ENCODE measurements at regions of chr16 and their contacts with region 1.

Region 1: DNA sequence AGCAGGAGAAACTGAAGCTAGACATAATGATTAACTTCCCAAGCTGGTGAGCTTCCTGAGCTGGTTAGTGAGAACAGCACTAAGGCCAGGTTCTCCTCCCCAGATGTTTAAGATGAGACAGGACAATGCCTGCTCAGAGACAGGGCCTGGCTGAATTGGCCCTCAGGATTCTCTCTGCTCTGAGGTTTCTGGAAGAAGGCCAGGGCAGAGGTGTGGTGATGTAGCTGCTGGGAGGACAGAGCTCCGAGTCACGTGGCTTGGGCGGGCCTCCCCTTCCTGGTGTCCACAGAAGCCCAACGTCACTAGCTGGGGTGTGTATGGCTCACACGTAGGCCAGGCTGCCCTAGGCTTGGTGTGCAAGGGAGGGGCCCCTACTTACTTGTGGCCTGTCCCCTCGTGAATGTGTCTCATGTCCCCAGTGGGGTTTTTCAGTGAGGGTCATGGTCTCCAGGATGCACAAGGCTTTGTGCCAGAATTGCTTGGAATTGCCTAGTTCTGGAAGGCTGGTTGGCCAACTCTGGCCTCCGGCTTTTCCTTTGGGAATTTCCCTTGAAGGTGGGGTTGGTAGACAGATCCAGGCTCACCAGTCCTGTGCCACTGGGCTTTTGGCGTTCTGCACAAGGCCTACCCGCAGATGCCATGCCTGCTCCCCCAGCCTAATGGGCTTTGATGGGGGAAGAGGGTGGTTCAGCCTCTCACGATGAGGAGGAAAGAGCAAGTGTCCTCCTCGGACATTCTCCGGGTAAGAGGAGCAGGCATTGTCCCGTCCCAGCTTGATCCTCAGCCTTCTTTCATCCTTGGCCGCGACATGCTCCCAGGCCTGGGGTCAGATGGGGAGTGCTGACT is 3.4 kb downstream of the NOD2 start:
- DNase-seq: peak; percentile 75 to 79
- ATAC-seq: peak; percentile 62 to 90 (median 83)
- H3K4me3 ChIP-seq: peak overlapping the region in 2 of 10 donors; percentile 7 to 48
- H3K27ac ChIP-seq: peak overlapping the region in 9 of 10 donors; percentile 61 to 92 (median 78)
- H3K4me1 ChIP-seq: peaks cover 11 to 73% (median 36%) of the 10 kb centered on the region in 9 donors
- H3K27me3 ChIP-seq: peaks cover 0 to 7% (median 0%) of the 10 kb centered on the region in 7 donors
- CTCF ChIP-seq: no peak

Region 2: DNA sequence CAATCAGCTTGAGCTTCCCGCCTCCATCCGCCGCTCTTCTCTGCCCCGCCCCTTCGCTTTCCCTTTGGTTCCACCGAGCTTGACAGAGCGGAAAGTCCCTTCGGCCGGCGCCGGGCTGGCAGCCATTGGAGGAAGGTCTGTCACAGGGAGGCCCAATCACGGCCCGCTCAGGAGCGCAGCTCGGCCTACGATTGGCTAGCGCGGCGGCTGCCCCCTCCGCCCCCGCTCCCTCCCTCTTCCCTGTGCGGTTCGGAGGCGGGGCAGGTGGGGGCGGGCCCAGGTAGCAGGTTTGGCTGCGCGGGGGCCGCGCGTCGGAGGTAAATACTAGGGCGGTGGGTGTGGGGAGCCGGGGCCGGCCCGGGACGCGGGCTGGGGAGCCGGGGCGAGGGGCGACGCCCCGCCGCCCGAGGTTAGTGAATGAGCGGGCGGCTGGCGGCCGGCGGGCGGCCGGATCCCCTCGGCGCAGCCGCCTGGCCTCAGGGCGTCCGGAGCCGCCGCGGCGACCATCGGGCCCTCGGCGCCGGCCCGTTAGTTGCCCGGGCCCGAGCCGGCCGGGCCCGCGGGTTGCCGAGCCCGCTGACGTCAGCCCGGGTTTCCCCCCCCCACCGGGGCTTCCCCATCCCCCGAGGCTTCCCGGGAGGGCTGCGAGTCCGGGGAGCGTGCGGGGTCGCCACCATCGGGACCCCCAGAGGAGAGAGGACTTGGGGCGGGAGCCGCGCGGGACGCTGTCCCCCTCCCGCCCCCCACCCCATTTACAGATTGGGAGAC is 45.2 kb after region 1 on chr16 and contains the start of gene CYLD:
- intact Hi-C with region 1: loop called in 3 of 10 experiments (anchors 2 to 5 kb)
- DNase-seq: peak; percentile 99 to 100
- ATAC-seq: peak; percentile 98 to 100 (median 99)
- H3K4me3 ChIP-seq: peak within 1 kb of the TSS; percentile 48 to 98 (median 93)
- H3K27ac ChIP-seq: peak within 1 kb of the TSS; percentile 75 to 98 (median 90)
- H3K4me1 ChIP-seq: peaks cover 0 to 50% (median 34%) of the 10 kb centered on the region in 9 donors
- H3K27me3 ChIP-seq: no peaks in the 10 kb centered on the region
- CTCF ChIP-seq: no peak
- total RNA-seq, gene CYLD: 21.9 to 61.7 (median 39.9) TPM

Measured in heart right ventricle (tissue), 16 donors.